Endothelial cell of umbilical vein (primary cell): ENCODE measurements at regions of chr21 and their contacts with region 1.

Region 1: DNA sequence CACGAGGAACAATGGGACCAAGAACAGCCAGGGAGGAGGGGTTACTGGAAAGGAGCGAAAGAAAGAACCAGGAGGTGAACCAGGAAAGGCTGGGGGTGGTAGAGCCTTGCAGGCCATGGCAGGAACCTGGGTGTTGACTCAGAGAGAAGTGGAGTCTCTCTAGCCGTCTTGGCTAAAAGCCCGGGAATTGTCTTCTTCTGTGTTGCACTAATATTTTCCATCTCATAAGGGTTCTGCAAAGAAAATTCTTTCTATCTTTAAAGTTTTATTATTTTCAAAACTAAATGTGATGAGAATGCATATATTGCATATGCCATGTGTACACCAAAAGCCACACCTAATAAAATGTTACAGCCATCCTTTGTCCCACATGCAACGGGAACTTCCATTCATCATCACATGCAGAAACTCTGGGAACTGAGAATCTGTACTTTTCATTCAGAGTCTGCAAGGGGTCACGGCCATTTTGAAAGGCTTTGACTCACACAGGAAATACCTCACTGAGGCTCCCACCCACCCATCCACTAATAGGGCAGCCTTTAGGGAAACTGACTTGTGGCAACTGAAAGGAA is 38.0 kb downstream of the ERG start:
- DNase-seq: peak; percentile 97
- H3K4me3 ChIP-seq: peak overlapping the region in 1 of 3 experiments; percentile 32
- H3K27ac ChIP-seq: peak overlapping the region; percentile 98
- H3K4me1 ChIP-seq: peaks cover 73% of the 10 kb centered on the region
- H3K27me3 ChIP-seq: no peaks in the 10 kb centered on the region
- CTCF ChIP-seq: no peak
- POLR2A ChIP-seq: peak; percentile 69

Region 2: GRCh38 chr21:38478782-38479181 is 18.5 kb after region 1 on chr21:
- CTCF ChIA-PET with region 1: interaction called, 3 read pairs
- POLR2A ChIA-PET with region 1: no interaction called
- dilution Hi-C with region 1: no loop called
- intact Hi-C with region 1: loop called (anchors 1 kb)
- DNase-seq: no peak
- H3K4me3 ChIP-seq: no peak overlapping the region
- H3K27ac ChIP-seq: peak overlapping the region; percentile 99
- H3K4me1 ChIP-seq: peaks cover 94% of the 10 kb centered on the region
- H3K27me3 ChIP-seq: no peaks in the 10 kb centered on the region
- CTCF ChIP-seq: no peak
- POLR2A ChIP-seq: no peak

Region 3: DNA sequence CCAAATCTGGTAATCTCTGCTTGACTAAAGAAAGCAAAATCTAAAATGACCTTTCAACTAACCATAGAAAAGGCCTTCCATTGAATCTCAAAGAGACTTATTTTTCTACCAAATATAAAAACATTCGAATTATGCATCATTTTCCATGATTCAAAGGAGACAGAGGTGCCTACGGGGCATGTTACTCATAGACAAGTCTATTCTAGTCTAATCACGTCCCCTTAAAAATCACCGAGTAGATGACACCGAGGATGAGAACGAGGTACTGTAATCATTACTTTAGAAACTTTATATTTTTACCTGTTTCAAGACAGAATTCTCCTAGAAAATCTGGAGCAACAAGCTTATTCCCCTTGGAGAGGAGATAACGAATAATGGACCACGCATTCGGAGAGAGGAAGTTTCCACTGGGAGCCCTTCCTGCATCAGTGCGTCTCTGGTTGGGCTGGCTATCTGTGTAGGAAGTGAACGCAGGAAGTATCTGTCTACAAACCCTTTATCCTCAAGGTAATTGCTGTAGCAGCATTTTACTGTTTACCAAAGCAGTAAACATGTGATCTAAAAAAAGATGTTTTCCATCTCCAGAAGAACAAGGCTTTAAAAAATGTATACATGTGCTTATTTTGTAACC is 28.5 kb after region 1 on chr21:
- CTCF ChIA-PET with region 1: interaction called, 3 read pairs
- POLR2A ChIA-PET with region 1: interaction called, 5 read pairs
- dilution Hi-C with region 1: no loop called
- intact Hi-C with region 1: loop called (anchors 1 kb)
- DNase-seq: peak; percentile 81
- H3K4me3 ChIP-seq: peak overlapping the region in 1 of 3 experiments; percentile 32
- H3K27ac ChIP-seq: peak overlapping the region; percentile 100
- H3K4me1 ChIP-seq: peaks cover 97% of the 10 kb centered on the region
- H3K27me3 ChIP-seq: no peaks in the 10 kb centered on the region
- CTCF ChIP-seq: no peak
- POLR2A ChIP-seq: no peak

Region 4: DNA sequence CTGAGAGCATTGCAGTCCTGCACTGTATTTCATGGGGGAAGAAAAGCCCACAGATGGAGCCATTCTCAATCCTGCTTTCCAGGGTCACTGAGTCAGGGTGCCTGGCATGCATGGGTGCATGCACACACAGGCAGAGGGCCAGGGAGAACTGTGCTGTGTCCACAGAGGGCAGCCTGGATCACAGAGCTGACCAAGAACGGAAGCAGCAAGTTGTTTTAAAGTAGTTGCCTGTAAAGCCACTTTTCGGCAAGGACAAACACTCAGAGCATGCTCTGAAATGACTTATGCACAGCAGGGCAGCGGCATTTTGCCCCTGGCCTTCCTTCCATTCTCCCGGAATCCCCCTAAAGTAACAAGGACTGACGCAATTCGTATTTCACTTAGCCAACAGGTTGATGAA is 34.4 kb after region 1 on chr21:
- CTCF ChIA-PET with region 1: interaction called, 3 read pairs
- POLR2A ChIA-PET with region 1: interaction called, 4 read pairs
- dilution Hi-C with region 1: no loop called
- intact Hi-C with region 1: loop called (anchors 1 kb)
- DNase-seq: peak; percentile 88
- H3K4me3 ChIP-seq: peak overlapping the region; percentile 84 to 100 (median 99)
- H3K27ac ChIP-seq: peak overlapping the region; percentile 100
- H3K4me1 ChIP-seq: peaks cover 63% of the 10 kb centered on the region
- H3K27me3 ChIP-seq: no peaks in the 10 kb centered on the region
- CTCF ChIP-seq: no peak
- POLR2A ChIP-seq: peak; percentile 86